HCT116 (cell line): ENCODE measurements at regions of chr4 and their contacts with region 1.

Region 1: DNA sequence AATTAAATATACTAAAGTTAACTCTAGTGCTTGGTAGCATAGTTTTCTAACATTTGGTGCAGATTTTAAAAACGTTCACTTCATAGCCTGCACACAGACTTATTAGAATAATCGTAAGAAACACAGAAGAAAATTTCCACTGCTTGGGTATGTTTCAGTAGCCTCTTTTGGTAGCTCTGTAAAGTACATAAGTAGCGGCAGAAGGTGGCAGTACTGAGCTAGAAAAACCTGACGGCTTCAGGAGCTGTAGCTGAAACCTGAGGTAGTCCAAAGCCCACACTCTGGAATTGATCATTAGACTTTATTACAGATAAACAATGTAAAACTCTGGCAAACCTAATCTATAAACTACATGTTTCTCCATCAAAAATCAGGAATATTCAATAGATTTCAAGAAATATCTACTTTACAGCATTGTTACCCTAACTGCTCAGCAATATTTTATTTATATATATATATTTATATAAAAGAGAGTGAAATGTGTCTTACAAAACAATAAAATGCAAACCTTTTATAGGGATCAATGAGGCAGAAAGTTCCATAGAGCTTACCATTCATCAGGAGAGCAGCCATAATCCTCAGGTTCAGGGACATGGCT is 88.2 kb downstream of the ATP8A1 start:
- DNase-seq: peak; percentile 59
- ATAC-seq: peak; percentile 95
- H3K4me3 ChIP-seq: no peak overlapping the region
- H3K27ac ChIP-seq: no peak overlapping the region
- H3K4me1 ChIP-seq: no peaks in the 10 kb centered on the region
- H3K27me3 ChIP-seq: no peaks in the 10 kb centered on the region
- CTCF ChIP-seq: peak; percentile 31 to 71 (median 65); a peak in 5 of 6 replicates
- POLR2A ChIP-seq: no peak
- RAD21 ChIP-seq: peak; percentile 68

Region 2: GRCh38 chr4:42558156-42558555 is 10.6 kb before region 1 on chr4:
- CTCF ChIA-PET with region 1: interaction called, 15 read pairs
- POLR2A ChIA-PET with region 1: no interaction called
- RAD21 ChIA-PET with region 1: no interaction called
- intact Hi-C with region 1: no loop called
- DNase-seq: no peak
- ATAC-seq: no peak
- H3K4me3 ChIP-seq: no peak overlapping the region
- H3K27ac ChIP-seq: no peak overlapping the region
- H3K4me1 ChIP-seq: peaks cover 3% of the 10 kb centered on the region in 2 experiments; a peak in 2 of 4 replicates
- H3K27me3 ChIP-seq: no peaks in the 10 kb centered on the region
- CTCF ChIP-seq: no peak
- POLR2A ChIP-seq: no peak
- RAD21 ChIP-seq: no peak

Region 3: GRCh38 chr4:42768125-42768748 is 199.5 kb after region 1 on chr4:
- CTCF ChIA-PET with region 1: no interaction called
- POLR2A ChIA-PET with region 1: no interaction called
- RAD21 ChIA-PET with region 1: no interaction called
- intact Hi-C with region 1: no loop called
- DNase-seq: no peak
- ATAC-seq: no peak
- H3K4me3 ChIP-seq: no peak overlapping the region
- H3K27ac ChIP-seq: no peak overlapping the region
- H3K4me1 ChIP-seq: no peaks in the 10 kb centered on the region
- H3K27me3 ChIP-seq: no peaks in the 10 kb centered on the region
- CTCF ChIP-seq: no peak
- POLR2A ChIP-seq: no peak
- RAD21 ChIP-seq: no peak

Region 4: DNA sequence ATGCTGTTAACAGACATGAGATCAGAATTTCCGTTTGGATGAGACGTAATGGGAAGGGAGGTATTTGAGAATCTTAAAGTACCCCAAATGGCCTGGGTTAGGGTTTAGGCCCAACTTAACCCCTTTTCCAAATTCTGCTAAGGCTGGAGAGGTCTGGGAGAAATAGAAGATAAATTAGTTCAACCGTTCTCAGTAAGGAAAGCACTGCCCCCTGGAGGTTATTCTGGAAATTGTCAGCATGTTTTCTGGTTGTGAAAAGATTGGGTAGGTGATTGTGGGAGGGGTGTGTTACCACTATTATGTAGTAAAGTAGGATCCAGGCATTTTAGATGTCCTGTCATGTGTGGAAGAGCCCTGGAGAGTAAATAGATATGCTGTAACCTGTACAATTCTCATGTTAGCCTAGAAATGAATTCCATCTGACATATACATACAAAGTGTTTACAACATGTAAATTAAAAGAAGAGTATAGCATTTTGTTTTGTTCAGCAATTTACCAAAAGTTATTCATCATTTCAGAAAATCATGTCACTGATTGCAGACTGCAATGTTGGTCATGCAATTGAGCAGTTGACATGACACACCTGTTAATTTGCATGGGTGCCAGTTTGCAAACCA is 297.0 kb after region 1 on chr4:
- CTCF ChIA-PET with region 1: interaction called, 15 read pairs
- POLR2A ChIA-PET with region 1: no interaction called
- RAD21 ChIA-PET with region 1: interaction called in 1 of 2 experiments, 4 read pairs
- intact Hi-C with region 1: loop called (anchors 1 kb)
- DNase-seq: peak; percentile 29
- ATAC-seq: peak; percentile 44; the same call in 1 of the 2 replicates
- H3K4me3 ChIP-seq: no peak overlapping the region
- H3K27ac ChIP-seq: no peak overlapping the region
- H3K4me1 ChIP-seq: no peaks in the 10 kb centered on the region
- H3K27me3 ChIP-seq: no peaks in the 10 kb centered on the region
- CTCF ChIP-seq: peak; percentile 36 to 72 (median 57); a peak in 5 of 6 replicates
- POLR2A ChIP-seq: no peak
- RAD21 ChIP-seq: peak; percentile 56